SK-N-SH (cell line): ENCODE measurements at regions of chr12 and their contacts with region 1.

Region 1: DNA sequence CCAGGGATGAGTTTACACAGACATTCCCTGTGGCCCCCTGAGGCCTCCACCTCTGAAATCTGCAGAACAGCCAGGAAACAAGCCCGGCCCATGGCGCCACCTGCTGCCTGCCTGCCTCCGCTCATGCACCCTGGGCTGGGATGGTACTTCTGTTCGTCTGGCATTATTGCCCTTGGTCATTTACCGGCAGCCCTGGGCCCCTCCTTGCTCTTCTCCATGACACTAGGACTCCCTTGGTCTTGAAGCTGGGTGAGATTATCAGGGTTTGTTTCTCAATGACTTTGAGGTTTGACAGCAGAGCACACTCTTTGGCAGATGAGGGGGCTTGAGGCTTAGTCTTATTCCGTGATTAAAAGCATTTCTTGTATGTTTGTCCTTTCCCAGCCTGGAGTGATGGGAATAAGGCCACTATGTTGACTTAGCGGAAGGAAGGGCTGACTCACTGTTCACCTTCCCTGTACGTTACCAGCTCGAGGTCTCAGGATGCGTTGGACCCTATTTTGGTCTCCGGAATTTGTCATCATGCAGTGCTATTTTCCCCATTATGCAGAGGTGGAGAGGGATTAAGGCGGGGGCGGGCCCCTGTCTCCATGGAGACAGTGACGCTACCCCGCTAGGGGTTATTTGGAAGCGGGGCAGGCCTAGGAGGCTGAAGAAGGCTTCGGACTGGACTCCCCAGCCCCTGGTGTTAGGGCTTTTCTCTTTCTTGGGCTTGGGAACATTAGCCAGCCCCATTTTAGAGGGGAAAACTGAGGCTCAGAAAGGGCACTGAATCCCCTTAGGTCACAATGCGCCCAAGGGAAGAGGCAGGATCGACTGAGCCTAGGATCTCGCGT is 706 bp upstream of the PEX5 start:
- DNase-seq: peak; percentile 75
- H3K4me3 ChIP-seq: peak overlapping the region; percentile 91 to 95
- H3K27ac ChIP-seq: peak overlapping the region; percentile 40 to 82
- H3K4me1 ChIP-seq: peaks cover 9 to 20% of the 10 kb centered on the region in 2 experiments; a peak in 3 of 4 replicates
- H3K27me3 ChIP-seq: no peaks in the 10 kb centered on the region
- CTCF ChIP-seq: peak; percentile 64
- EP300 ChIP-seq: no peak
- RAD21 ChIP-seq: peak; percentile 73

Region 2: GRCh38 chr12:7099290-7099996 is 89.3 kb before region 1 on chr12:
- CTCF ChIA-PET with region 1: no interaction called
- POLR2A ChIA-PET with region 1: no interaction called
- DNase-seq: no peak
- H3K4me3 ChIP-seq: no peak overlapping the region
- H3K27ac ChIP-seq: no peak overlapping the region
- H3K4me1 ChIP-seq: no peaks in the 10 kb centered on the region
- H3K27me3 ChIP-seq: no peaks in the 10 kb centered on the region
- CTCF ChIP-seq: no peak
- EP300 ChIP-seq: no peak
- RAD21 ChIP-seq: no peak

Region 3: DNA sequence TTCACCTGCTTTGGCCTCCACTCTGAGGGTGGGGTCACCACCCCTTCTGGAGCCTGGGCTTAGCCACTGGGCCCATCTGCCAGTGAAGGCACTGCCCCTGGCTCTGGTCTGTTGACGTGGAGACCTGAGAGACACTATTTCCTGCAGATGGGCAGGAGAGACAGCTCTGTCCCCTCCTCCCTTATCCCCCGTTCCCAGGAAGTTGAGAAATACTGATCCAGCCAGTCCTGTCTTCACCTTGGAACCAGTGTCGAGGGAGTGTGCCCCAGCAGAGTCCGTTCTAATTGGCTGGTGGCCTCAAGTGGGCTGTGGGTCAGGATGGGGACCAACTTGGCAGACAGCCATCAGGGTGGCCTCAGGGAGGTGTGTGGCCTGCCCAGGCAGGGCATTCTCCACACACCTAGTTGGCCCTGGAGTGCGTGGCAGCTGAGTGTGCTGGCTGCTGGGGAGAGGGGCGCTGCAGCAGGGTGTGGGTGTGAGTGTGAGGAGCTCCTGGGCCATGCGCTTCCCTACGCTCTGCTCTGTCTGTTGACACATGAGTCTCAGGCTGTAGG is 33.2 kb before region 1 on chr12:
- CTCF ChIA-PET with region 1: interaction called, 30 read pairs
- POLR2A ChIA-PET with region 1: interaction called, 3 read pairs
- DNase-seq: peak; percentile 69
- H3K4me3 ChIP-seq: no peak overlapping the region
- H3K27ac ChIP-seq: peak overlapping the region in 1 of 2 experiments; percentile 86; a peak in 3 of 4 replicates
- H3K4me1 ChIP-seq: peaks cover 0 to 33% of the 10 kb centered on the region in 2 experiments; a peak in 2 of 4 replicates
- H3K27me3 ChIP-seq: no peaks in the 10 kb centered on the region
- CTCF ChIP-seq: no peak
- EP300 ChIP-seq: no peak
- RAD21 ChIP-seq: no peak

Region 4: GRCh38 chr12:7162691-7163114 is 26.1 kb before region 1 on chr12:
- CTCF ChIA-PET with region 1: interaction called, 15 read pairs
- POLR2A ChIA-PET with region 1: no interaction called
- DNase-seq: no peak
- H3K4me3 ChIP-seq: no peak overlapping the region
- H3K27ac ChIP-seq: no peak overlapping the region
- H3K4me1 ChIP-seq: peaks cover 0 to 15% of the 10 kb centered on the region in 2 experiments; a peak in 1 of 4 replicates
- H3K27me3 ChIP-seq: no peaks in the 10 kb centered on the region; the same call in 1 of the 2 replicates
- CTCF ChIP-seq: no peak; the same call in 1 of the 2 replicates
- EP300 ChIP-seq: no peak
- RAD21 ChIP-seq: no peak

Region 5: GRCh38 chr12:7293670-7294069 is 104.9 kb after region 1 on chr12:
- CTCF ChIA-PET with region 1: no interaction called
- POLR2A ChIA-PET with region 1: no interaction called
- DNase-seq: no peak
- H3K4me3 ChIP-seq: no peak overlapping the region
- H3K27ac ChIP-seq: no peak overlapping the region
- H3K4me1 ChIP-seq: no peaks in the 10 kb centered on the region
- H3K27me3 ChIP-seq: peaks cover 9% of the 10 kb centered on the region; the same call in 1 of the 2 replicates
- CTCF ChIP-seq: no peak
- EP300 ChIP-seq: no peak
- RAD21 ChIP-seq: no peak